A549 (cell line): ENCODE measurements at regions of chr16 and their contacts with region 1.

Region 1: DNA sequence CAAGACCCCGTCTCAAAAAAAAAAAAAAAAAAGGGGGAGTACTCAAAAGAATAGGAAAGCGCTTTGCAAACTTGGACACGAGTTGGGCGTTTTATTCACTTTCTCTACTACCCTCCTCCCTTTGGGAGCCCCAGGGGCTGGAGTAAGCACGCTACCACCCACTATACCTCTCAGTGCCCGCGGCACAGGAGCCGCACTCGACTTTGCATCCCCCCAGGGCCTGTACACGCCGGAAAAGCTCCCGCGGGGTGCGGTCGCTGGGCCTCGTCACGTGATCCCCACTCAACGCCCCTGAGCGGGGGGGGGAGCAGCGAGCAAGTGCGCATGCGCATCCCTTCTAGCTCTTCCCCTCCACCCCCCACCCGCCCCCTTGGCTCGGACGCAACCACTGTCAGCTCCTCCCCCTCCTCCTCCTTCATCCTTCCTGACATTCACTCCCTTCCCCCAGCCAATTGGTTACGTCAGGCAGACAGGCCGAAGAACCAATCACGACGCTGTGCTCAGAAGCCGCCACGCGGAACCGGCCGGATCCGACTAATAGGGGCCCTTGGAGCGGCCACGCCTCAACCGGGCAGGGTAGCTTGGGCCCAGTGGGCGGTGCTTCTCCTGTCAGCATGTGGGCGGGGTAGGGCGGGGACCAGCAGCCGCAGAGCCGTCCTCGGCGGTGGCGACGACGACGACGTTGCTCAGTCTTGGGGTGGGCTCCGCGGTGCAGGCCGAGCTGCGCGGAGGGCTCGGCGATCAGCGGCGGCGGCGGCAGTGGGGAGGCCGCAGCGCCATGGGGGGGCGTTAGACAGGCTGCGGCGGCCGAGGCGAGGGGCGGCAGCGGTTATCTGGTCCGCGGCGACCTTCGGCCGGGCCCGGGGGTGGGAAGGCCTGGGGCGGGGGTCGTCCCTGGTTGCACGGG is at the start of gene HAPSTR1:
- DNase-seq: peak; percentile 95 to 100
- ATAC-seq: peak; percentile 89 to 96
- H3K4me3 ChIP-seq: peak within 1 kb of the TSS; percentile 89
- H3K27ac ChIP-seq: peak within 1 kb of the TSS; percentile 94 to 98
- H3K4me1 ChIP-seq: peaks cover 36% of the 10 kb centered on the region
- CTCF ChIP-seq: no peak
- EP300 ChIP-seq: no peak
- POLR2A ChIP-seq: peak; percentile 99
- RAD21 ChIP-seq: peak; percentile 5 to 13; a peak in 2 of 5 replicates
- polyA plus RNA-seq, gene HAPSTR1: 36.9 and 41.8 TPM in 2 replicates

Region 2: GRCh38 chr16:8905168-8905762 is 185.9 kb before region 1 on chr16:
- CTCF ChIA-PET with region 1: no interaction called
- POLR2A ChIA-PET with region 1: no interaction called
- DNase-seq: peak; percentile 36 to 69
- ATAC-seq: peak; percentile 87 to 89
- H3K4me3 ChIP-seq: no peak overlapping the region
- H3K27ac ChIP-seq: no peak overlapping the region
- H3K4me1 ChIP-seq: peaks cover 6% of the 10 kb centered on the region; the same call in 1 of the 3 replicates
- CTCF ChIP-seq: peak; percentile 27
- EP300 ChIP-seq: no peak
- POLR2A ChIP-seq: no peak
- RAD21 ChIP-seq: peak; percentile 57 to 73

Region 3: DNA sequence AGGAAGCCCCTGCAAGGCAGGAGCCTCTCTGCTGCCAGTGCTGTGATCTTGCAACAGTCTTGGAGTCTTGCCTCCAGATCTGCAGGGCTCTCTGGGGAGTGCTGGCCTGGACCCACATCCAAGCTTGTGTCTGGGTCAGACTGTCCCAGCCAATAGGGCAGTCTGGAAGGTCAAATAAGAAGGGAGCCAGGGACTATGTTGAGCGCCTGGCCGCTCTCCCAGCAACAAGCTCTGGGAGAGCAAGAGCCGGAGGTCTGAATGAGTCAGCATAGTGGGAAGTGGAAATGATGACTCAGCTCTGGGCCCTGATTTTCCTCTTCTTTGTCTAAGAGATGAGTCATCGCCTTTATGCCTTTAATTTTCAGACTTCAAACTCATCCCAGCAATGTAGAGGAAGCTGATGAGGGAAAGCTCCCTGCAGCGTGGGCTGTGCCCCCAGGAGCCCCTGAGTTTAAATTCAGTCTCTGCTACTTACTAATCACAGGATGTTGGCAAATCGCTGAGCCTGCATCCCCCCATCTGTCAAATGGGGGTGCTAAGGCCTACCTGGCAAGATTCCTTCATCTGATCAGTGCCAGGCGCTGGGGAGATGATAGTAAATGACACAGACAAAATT is 43.4 kb before region 1 on chr16:
- CTCF ChIA-PET with region 1: interaction called, 5 read pairs
- POLR2A ChIA-PET with region 1: interaction called, 51 read pairs
- DNase-seq: peak; percentile 79 to 98
- ATAC-seq: peak; percentile 98
- H3K4me3 ChIP-seq: no peak overlapping the region
- H3K27ac ChIP-seq: peak overlapping the region; percentile 83 to 86
- H3K4me1 ChIP-seq: peaks cover 38% of the 10 kb centered on the region
- CTCF ChIP-seq: no peak
- EP300 ChIP-seq: peak; percentile 76 to 85; a peak in 3 of 5 replicates
- POLR2A ChIP-seq: no peak
- RAD21 ChIP-seq: peak in 1 of 2 experiments; percentile 43; a peak in 1 of 5 replicates

Region 4: GRCh38 chr16:9061358-9061813 is 29.8 kb before region 1 on chr16:
- CTCF ChIA-PET with region 1: no interaction called
- POLR2A ChIA-PET with region 1: interaction called, 12 read pairs
- DNase-seq: no peak
- ATAC-seq: peak; percentile 48 to 74; a peak in 5 of 6 replicates
- H3K4me3 ChIP-seq: no peak overlapping the region
- H3K27ac ChIP-seq: peak overlapping the region; percentile 6 to 71; a peak in 3 of 6 replicates
- H3K4me1 ChIP-seq: peaks cover 19% of the 10 kb centered on the region
- CTCF ChIP-seq: no peak
- EP300 ChIP-seq: no peak
- POLR2A ChIP-seq: no peak
- RAD21 ChIP-seq: no peak

Region 5: GRCh38 chr16:9068886-9069285 is 22.3 kb before region 1 on chr16:
- CTCF ChIA-PET with region 1: interaction called, 3 read pairs
- POLR2A ChIA-PET with region 1: interaction called, 18 read pairs
- DNase-seq: no peak
- ATAC-seq: no peak
- H3K4me3 ChIP-seq: no peak overlapping the region
- H3K27ac ChIP-seq: peak overlapping the region; percentile 74 to 84; a peak in 5 of 6 replicates
- H3K4me1 ChIP-seq: peaks cover 15% of the 10 kb centered on the region
- CTCF ChIP-seq: no peak
- EP300 ChIP-seq: no peak
- POLR2A ChIP-seq: no peak
- RAD21 ChIP-seq: no peak

Region 6: DNA sequence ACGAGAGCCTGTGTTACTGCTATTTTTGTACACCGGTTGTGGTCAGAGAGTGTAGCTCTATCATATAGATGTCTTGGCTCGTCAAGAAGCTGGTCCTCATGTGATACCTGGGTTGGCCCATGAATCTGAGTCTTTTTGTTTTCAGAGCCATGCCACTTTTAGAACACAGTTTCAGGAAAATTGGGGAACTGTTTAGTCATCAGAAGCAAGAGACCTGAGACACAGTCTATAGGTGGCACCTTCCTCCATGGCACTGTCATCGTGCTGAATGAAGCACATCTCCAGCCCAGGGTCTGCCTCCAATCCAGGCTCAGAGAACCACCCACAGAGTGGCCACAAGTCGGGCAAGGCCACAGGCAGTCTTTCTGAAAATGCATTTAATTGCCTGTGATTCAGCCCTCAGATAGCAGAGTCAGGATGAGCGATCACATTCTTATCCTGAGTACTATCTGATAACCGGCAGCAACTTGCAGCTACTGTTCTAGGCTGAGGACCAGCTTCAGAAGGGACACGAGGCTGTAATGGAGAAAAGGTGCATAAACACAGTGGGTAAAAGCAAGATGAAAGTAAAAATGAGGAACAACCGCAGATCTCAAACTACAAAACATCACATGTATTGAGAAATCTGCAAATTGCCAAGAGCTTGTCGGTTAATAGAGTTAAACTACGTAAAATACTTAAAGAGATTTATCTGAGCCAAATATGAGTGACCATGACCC is 14.0 kb before region 1 on chr16:
- CTCF ChIA-PET with region 1: no interaction called
- POLR2A ChIA-PET with region 1: interaction called, 30 read pairs
- DNase-seq: peak in 1 of 2 experiments; percentile 79
- ATAC-seq: peak; percentile 87 to 89
- H3K4me3 ChIP-seq: no peak overlapping the region
- H3K27ac ChIP-seq: peak overlapping the region; percentile 57 to 83
- H3K4me1 ChIP-seq: peaks cover 35% of the 10 kb centered on the region
- CTCF ChIP-seq: no peak
- EP300 ChIP-seq: no peak
- POLR2A ChIP-seq: no peak
- RAD21 ChIP-seq: peak in 1 of 2 experiments; percentile 4; a peak in 1 of 5 replicates